AG04450 (cell line): ENCODE measurements at regions of chrX and their contacts with region 1.

Region 1: DNA sequence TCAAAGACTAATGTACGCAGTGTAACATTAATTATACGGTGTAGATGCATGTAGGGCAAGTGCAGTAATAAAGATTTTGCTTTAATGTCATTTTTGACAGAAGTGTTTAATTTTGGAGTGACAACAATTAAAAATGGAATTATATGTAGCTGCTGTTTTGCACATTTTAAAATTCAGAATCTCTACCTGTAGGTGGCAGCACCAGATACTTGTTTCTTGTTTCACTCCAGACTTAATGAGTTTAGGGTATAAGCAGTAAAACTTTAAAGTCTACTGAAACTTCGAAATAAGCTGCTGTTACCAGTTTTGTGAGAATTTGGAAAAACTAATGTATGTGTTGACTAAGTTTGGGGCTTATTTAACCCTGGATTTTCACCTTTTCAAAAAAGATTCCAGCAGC is 144.9 kb downstream of the POLA1 start:
- DNase-seq: no peak
- H3K4me3 ChIP-seq: no peak overlapping the region
- H3K27ac ChIP-seq: no peak overlapping the region
- H3K27me3 ChIP-seq: no peaks in the 10 kb centered on the region
- CTCF ChIP-seq: peak; percentile 46

Region 2: GRCh38 chrX:24748202-24748843 is 90.3 kb before region 1 on chrX:
- CTCF ChIA-PET with region 1: interaction called, 13 read pairs
- POLR2A ChIA-PET with region 1: no interaction called
- DNase-seq: no peak
- H3K4me3 ChIP-seq: no peak overlapping the region
- H3K27ac ChIP-seq: no peak overlapping the region
- H3K27me3 ChIP-seq: no peaks in the 10 kb centered on the region
- CTCF ChIP-seq: no peak

Region 3: DNA sequence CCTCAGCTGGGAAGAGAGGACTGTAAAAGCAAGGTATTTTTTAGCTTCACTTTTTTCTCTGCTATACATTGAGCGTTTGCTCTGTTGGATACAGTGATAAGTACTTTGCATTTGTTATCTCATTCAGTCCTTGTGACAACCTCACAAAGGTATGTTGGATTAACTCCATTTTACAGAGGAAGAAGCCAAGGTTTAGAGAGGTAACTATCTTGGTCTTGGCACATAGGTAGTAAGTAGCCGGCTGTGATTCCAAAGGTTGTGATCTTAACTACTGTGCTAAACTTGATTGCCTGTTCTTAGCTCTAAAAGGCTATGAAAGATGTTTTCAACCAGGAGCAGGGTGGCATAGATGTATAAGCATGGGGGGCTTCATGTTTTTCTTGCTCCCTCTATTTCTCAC is 10.5 kb before region 1 on chrX:
- CTCF ChIA-PET with region 1: interaction called, 45 read pairs
- POLR2A ChIA-PET with region 1: no interaction called
- DNase-seq: no peak
- H3K4me3 ChIP-seq: no peak overlapping the region
- H3K27ac ChIP-seq: no peak overlapping the region
- H3K27me3 ChIP-seq: no peaks in the 10 kb centered on the region
- CTCF ChIP-seq: no peak

Region 4: DNA sequence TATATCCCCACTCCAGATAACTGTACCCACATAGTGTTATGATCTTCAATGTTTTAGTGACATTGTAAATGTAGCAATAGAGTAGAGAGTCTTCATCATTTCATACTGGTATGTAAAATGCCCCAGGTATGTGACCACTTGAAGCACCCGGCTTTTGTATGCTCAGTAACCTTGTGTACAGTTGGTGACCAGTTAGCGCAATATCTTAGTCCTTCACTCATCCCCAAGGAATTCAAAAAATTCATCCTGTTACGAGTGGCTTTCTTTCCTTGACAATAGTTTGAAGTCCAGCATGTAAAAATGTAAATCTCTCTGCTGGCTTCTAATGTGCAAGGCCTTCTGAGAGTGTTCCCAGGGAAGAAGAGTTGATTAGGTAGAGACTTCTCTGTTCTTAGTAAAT is 31.5 kb after region 1 on chrX:
- CTCF ChIA-PET with region 1: interaction called, 10 read pairs
- POLR2A ChIA-PET with region 1: no interaction called
- DNase-seq: no peak
- H3K4me3 ChIP-seq: no peak overlapping the region
- H3K27ac ChIP-seq: no peak overlapping the region
- H3K27me3 ChIP-seq: no peaks in the 10 kb centered on the region
- CTCF ChIP-seq: no peak

Region 5: GRCh38 chrX:25144043-25144940 is 305.7 kb after region 1 on chrX:
- CTCF ChIA-PET with region 1: interaction called, 93 read pairs
- POLR2A ChIA-PET with region 1: no interaction called
- DNase-seq: peak; percentile 10
- H3K4me3 ChIP-seq: no peak overlapping the region
- H3K27ac ChIP-seq: no peak overlapping the region
- H3K27me3 ChIP-seq: no peaks in the 10 kb centered on the region
- CTCF ChIP-seq: peak; percentile 68